ENCODE measurements at regions of chr15 and their contacts with region 1.

Region 1: GRCh38 chr15:70264014-70264582 is 166.4 kb upstream of the TLE3 start:
- DNase-seq: peak; percentile 86 to 94 (median 92)
- H3K4me3 ChIP-seq: peak overlapping the region in 1 of 3 experiments; percentile 44
- H3K4me3 Mint-ChIP-seq: peak overlapping the region; percentile 31 to 77
- H3K27ac ChIP-seq: peak overlapping the region; percentile 79 to 85
- H3K27ac Mint-ChIP-seq: peak overlapping the region; percentile 86 to 100 (median 100)
- H3K4me1 ChIP-seq: peaks cover 86 to 95% of the 10 kb centered on the region in 2 donors
- H3K4me1 Mint-ChIP-seq: peaks cover 89% of the 10 kb centered on the region
- H3K27me3 ChIP-seq: peaks cover 0 to under 1% of the 10 kb centered on the region in 2 donors
- H3K27me3 Mint-ChIP-seq: peaks cover 9 to 17% (median 9%) of the 10 kb centered on the region in 3 donors
- CTCF ChIP-seq: no peak

Region 2: DNA sequence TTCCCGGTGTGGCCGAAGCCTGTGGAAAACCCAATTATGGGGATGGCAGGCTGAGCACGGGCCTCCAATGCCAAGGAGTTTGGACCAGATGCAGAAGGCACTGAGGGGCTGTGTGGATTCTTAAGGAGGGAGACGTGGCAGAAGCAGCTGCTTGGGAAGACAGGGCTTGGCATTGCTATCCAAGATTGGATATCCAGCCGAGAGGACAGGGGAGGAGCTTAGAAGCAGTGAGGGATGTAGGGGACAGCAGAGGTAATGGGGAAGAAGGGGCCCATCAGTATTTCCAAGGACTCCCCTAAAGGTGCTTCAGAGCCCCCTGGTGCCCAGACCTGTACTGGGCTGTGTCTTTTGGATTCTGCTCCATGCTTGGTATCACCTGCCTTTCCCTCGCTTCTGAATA is 53.6 kb before region 1 on chr15:
- intact Hi-C with region 1: no loop called
- DNase-seq: no peak
- H3K4me3 ChIP-seq: no peak overlapping the region
- H3K4me3 Mint-ChIP-seq: no peak overlapping the region
- H3K27ac ChIP-seq: no peak overlapping the region
- H3K27ac Mint-ChIP-seq: no peak overlapping the region
- H3K4me1 ChIP-seq: no peaks in the 10 kb centered on the region
- H3K4me1 Mint-ChIP-seq: no peaks in the 10 kb centered on the region
- H3K27me3 ChIP-seq: no peaks in the 10 kb centered on the region
- H3K27me3 Mint-ChIP-seq: peaks cover 7 to 9% (median 7%) of the 10 kb centered on the region in 3 donors
- CTCF ChIP-seq: no peak

Region 3: GRCh38 chr15:70339681-70340493 is 75.8 kb after region 1 on chr15:
- intact Hi-C with region 1: loop called in 1 of 2 experiments (anchors 5 kb)
- DNase-seq: peak; percentile 63 to 97 (median 85)
- H3K4me3 ChIP-seq: no peak overlapping the region
- H3K4me3 Mint-ChIP-seq: no peak overlapping the region
- H3K27ac ChIP-seq: peak overlapping the region in 1 of 2 donors; percentile 24
- H3K27ac Mint-ChIP-seq: peak overlapping the region; percentile 65 to 87 (median 77)
- H3K4me1 ChIP-seq: peaks cover 27 to 34% of the 10 kb centered on the region in 2 donors
- H3K4me1 Mint-ChIP-seq: peaks cover 31% of the 10 kb centered on the region
- H3K27me3 ChIP-seq: no peaks in the 10 kb centered on the region
- H3K27me3 Mint-ChIP-seq: peaks cover 1 to 3% (median 2%) of the 10 kb centered on the region in 3 donors
- CTCF ChIP-seq: no peak

Region 4: DNA sequence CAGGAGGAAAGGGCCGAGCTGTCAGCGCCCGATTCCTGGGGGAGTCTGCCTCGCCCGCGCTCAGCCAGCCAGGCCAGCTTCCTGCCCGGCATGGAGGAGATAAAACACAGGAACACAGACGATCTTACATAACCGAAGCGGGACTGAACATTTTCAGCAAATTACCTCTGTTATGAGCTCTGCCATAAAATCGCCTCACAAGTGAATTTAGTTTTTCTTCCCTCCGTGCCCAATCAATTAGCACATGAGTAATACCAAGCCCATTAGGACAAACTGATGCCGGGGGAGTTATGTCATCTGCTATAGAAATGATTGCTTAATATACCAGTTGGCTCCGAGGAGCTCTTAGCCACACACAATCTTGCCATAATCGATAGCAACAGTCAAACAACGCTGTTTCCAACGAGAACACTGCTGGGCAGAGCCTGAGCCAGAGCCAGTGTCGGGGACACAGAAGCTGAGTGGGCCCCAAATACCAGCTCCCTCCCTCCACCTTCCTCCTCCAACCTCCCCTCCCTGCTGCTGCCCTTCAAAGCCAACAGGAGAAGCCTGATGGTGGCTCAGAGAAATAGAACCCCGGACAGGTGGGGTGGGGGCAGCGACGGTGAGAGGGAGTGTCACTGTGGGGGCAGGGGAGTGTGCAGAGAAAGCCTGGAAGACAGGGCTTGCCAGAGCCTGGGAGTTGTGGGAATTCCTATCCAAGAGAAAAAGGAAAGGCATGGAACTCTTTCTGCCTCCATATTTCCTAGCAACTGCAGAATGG is 113.0 kb after region 1 on chr15:
- intact Hi-C with region 1: no loop called
- DNase-seq: peak; percentile 50 to 55 (median 55)
- H3K4me3 ChIP-seq: peak overlapping the region in 1 of 3 experiments; percentile 46
- H3K4me3 Mint-ChIP-seq: peak overlapping the region; percentile 40 to 71
- H3K27ac ChIP-seq: no peak overlapping the region
- H3K27ac Mint-ChIP-seq: peak overlapping the region in 2 of 7 donors; percentile 22 to 37
- H3K4me1 ChIP-seq: peaks cover 10% of the 10 kb centered on the region in 2 donors
- H3K4me1 Mint-ChIP-seq: peaks cover 25% of the 10 kb centered on the region
- H3K27me3 ChIP-seq: peaks cover 0 to 8% of the 10 kb centered on the region in 2 donors
- H3K27me3 Mint-ChIP-seq: peaks cover 17 to 36% (median 28%) of the 10 kb centered on the region in 3 donors
- CTCF ChIP-seq: no peak

Region 5: DNA sequence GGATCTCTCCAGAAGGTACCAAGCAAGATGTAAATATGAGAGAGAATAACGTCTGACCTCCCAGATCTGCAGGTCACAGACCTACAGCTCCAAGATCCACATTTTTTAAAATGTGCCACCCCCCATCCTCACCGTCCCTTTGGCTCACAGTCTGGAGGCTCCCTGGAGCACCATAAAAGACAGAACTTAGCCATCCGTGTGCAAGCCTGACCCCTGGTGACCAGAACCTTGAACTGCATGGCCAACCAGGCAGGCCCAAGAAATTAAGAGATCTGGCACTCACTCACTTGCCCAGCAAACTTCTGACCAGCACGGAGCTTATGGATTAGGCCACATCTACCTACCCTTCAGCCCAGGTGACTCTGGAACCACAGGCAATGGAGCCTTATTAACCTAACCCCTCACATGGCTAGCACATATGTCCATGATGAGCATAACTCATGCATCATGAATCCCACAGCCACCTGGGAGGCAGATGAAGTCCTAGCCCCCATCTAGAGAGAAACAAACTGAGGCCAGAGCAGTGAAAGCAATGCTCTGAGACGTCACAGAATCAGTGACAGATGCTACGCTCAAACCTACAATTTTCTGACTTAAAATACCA is 224.0 kb after region 1 on chr15:
- intact Hi-C with region 1: loop called in 1 of 2 experiments (anchors 5 kb)
- DNase-seq: peak; percentile 80 to 84 (median 82)
- H3K4me3 ChIP-seq: no peak overlapping the region
- H3K4me3 Mint-ChIP-seq: peak overlapping the region in 1 of 2 donors; percentile 53
- H3K27ac ChIP-seq: peak overlapping the region; percentile 93 to 96
- H3K27ac Mint-ChIP-seq: peak overlapping the region; percentile 97 to 100 (median 99)
- H3K4me1 ChIP-seq: peaks cover 87 to 96% of the 10 kb centered on the region in 2 donors
- H3K4me1 Mint-ChIP-seq: peaks cover 92% of the 10 kb centered on the region
- H3K27me3 ChIP-seq: no peaks in the 10 kb centered on the region
- H3K27me3 Mint-ChIP-seq: peaks cover 9 to 21% (median 11%) of the 10 kb centered on the region in 3 donors
- CTCF ChIP-seq: peak; percentile 94

Measured in CD14-positive monocyte (primary cell).